ENCODE measurements at regions of chr12 and their contacts with region 1.

Region 1: GRCh38 chr12:27383429-27384260 is 51.0 kb downstream of the BMAL2 start:
- DNase-seq: peak; percentile 43
- ATAC-seq: peak; percentile 94
- H3K4me3 ChIP-seq: no peak overlapping the region
- H3K27ac ChIP-seq: no peak overlapping the region
- H3K4me1 ChIP-seq: no peaks in the 10 kb centered on the region
- H3K27me3 ChIP-seq: no peaks in the 10 kb centered on the region
- CTCF ChIP-seq: peak; percentile 84 to 95 (median 91)
- EP300 ChIP-seq: no peak
- POLR2A ChIP-seq: no peak
- RAD21 ChIP-seq: peak; percentile 83

Region 2: DNA sequence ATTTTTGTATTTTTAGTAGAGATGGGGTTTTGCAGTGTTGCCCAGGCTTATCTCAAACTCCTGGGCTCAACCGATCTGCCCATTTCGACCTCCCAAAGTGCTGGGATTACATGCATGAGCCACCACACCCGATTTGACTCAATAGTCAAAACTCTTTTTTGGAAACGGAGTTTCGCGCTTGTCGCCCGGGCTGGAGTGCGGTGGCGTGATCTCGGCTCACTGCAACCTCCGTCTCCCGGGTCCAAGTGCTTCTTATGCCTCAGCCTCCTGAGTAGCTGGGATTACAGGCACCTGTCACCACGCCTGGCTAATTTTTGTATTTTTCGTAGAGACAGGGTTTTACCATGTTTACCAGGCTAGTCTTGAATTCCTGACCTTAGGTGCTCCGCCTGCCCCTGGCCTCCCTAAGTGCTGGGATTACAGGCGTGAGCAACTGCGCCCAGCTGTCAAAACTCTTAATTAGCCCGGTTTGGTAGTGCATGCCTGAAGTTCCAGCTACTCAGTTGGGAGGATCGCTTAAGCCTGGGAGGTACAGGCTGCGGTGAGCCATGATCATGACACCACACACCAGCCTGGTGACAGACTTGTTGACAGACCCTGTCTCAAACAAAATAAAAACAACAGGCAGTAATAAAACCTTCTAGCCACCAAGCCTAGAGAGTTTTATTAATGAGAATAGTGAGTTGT is 348.9 kb before region 1 on chr12:
- CTCF ChIA-PET with region 1: interaction called, 17 read pairs
- POLR2A ChIA-PET with region 1: no interaction called
- RAD21 ChIA-PET with region 1: interaction called, 6 read pairs
- SMC1A ChIA-PET with region 1: interaction called, 4 read pairs
- in situ Hi-C with region 1: no loop called
- intact Hi-C with region 1: no loop called
- DNase-seq: no peak
- ATAC-seq: no peak
- H3K4me3 ChIP-seq: no peak overlapping the region
- H3K27ac ChIP-seq: no peak overlapping the region
- H3K4me1 ChIP-seq: no peaks in the 10 kb centered on the region
- H3K27me3 ChIP-seq: no peaks in the 10 kb centered on the region
- CTCF ChIP-seq: no peak
- EP300 ChIP-seq: no peak
- POLR2A ChIP-seq: no peak
- RAD21 ChIP-seq: no peak

Region 3: DNA sequence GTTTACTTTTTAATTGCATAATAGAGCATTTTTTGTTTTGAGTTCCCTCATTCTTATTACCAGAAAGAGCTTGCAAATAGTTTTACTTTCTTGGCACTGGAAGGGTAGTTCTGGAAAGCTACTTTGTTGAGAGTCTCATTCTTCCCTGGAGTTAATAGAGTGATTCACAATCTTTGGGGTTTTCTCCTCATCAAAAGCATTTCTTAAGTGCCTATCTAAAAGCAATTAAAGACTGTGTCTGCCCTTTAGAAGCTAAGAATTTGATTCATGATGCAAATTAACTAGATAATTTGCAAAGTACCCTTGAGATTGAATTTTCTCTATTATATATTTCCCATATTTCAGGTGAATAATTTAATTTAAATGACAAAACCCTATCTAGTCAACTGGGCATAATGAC is 59.1 kb before region 1 on chr12:
- CTCF ChIA-PET with region 1: interaction called, 61 read pairs
- POLR2A ChIA-PET with region 1: no interaction called
- RAD21 ChIA-PET with region 1: interaction called, 7 read pairs
- SMC1A ChIA-PET with region 1: interaction called, 16 read pairs
- in situ Hi-C with region 1: no loop called
- intact Hi-C with region 1: no loop called
- DNase-seq: no peak
- ATAC-seq: no peak
- H3K4me3 ChIP-seq: no peak overlapping the region
- H3K27ac ChIP-seq: no peak overlapping the region
- H3K4me1 ChIP-seq: peaks cover 9% of the 10 kb centered on the region
- H3K27me3 ChIP-seq: no peaks in the 10 kb centered on the region
- CTCF ChIP-seq: no peak
- EP300 ChIP-seq: no peak
- POLR2A ChIP-seq: no peak
- RAD21 ChIP-seq: no peak

Region 4: DNA sequence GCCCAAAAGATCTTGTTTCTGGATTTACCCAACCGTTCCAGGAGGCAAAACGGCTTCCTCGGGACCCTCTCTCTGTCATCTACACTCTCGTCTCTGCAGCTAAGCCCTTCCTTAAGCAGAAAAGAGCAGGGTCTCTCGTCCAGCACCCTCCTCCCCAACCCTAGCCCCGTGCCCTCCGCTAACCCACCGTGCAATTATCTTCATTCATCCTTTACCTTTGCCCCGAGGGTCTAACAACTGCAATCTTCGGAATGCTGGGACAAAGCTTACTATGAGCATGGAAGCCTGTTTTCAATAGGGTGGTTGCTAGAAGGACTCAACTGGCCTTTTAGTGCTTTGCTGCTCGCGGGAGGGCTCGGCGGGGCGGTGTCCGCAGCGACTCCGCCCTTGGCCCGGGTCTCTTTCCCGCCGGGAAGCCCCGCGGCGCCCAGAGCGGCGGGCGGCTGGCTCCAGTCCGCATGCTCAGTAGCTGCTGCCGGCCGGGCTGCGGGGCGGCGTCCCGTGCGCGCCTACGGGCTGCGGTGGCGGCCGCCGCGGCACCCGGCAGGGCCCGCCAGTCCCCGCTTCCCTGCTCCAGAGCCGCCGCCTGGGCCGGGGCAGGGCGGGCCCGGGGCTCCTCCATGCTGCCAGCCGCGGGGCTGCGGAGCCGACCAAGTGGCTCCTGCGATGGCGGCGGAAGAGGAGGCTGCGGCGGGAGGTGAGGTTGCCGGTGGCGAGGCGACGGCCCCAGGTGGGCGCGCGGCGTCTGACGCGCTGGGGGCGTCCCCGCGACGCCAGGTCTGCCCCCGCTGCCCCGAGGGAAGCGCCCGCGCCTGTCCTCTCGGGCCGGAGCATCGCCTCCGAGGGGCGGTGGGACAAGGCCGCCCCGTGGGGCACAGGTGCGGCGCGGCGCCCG is 51.0 kb before region 1 on chr12 and contains the start of gene BMAL2:
- CTCF ChIA-PET with region 1: interaction called, 61 read pairs
- POLR2A ChIA-PET with region 1: interaction called, 3 read pairs
- RAD21 ChIA-PET with region 1: interaction called, 10 read pairs
- SMC1A ChIA-PET with region 1: interaction called, 15 read pairs
- in situ Hi-C with region 1: no loop called
- intact Hi-C with region 1: loop called (anchors 2 kb)
- DNase-seq: no peak
- ATAC-seq: peak; percentile 49
- H3K4me3 ChIP-seq: peak within 1 kb of the TSS; percentile 85
- H3K27ac ChIP-seq: peak within 1 kb of the TSS; percentile 89
- H3K4me1 ChIP-seq: peaks cover 42% of the 10 kb centered on the region
- H3K27me3 ChIP-seq: no peaks in the 10 kb centered on the region
- CTCF ChIP-seq: no peak
- EP300 ChIP-seq: no peak
- POLR2A ChIP-seq: peak; percentile 87
- RAD21 ChIP-seq: no peak
- polyA plus RNA-seq, gene BMAL2: 7.9 to 13.1 TPM

Region 5: GRCh38 chr12:27367078-27367477 is 16.6 kb before region 1 on chr12:
- CTCF ChIA-PET with region 1: interaction called, 10 read pairs
- POLR2A ChIA-PET with region 1: interaction called, 3 read pairs
- RAD21 ChIA-PET with region 1: interaction called, 3 read pairs
- SMC1A ChIA-PET with region 1: interaction called, 9 read pairs
- in situ Hi-C with region 1: no loop called
- intact Hi-C with region 1: no loop called
- DNase-seq: no peak
- ATAC-seq: no peak
- H3K4me3 ChIP-seq: no peak overlapping the region
- H3K27ac ChIP-seq: no peak overlapping the region
- H3K4me1 ChIP-seq: no peaks in the 10 kb centered on the region
- H3K27me3 ChIP-seq: no peaks in the 10 kb centered on the region
- CTCF ChIP-seq: no peak
- EP300 ChIP-seq: no peak
- POLR2A ChIP-seq: no peak
- RAD21 ChIP-seq: no peak

Region 6: GRCh38 chr12:27398466-27398865 is 14.8 kb after region 1 on chr12:
- CTCF ChIA-PET with region 1: interaction called, 10 read pairs
- POLR2A ChIA-PET with region 1: no interaction called
- RAD21 ChIA-PET with region 1: no interaction called
- SMC1A ChIA-PET with region 1: interaction called, 7 read pairs
- in situ Hi-C with region 1: no loop called
- intact Hi-C with region 1: no loop called
- DNase-seq: no peak
- ATAC-seq: no peak
- H3K4me3 ChIP-seq: no peak overlapping the region
- H3K27ac ChIP-seq: no peak overlapping the region
- H3K4me1 ChIP-seq: no peaks in the 10 kb centered on the region
- H3K27me3 ChIP-seq: no peaks in the 10 kb centered on the region
- CTCF ChIP-seq: no peak
- EP300 ChIP-seq: no peak
- POLR2A ChIP-seq: no peak
- RAD21 ChIP-seq: no peak

Region 7: DNA sequence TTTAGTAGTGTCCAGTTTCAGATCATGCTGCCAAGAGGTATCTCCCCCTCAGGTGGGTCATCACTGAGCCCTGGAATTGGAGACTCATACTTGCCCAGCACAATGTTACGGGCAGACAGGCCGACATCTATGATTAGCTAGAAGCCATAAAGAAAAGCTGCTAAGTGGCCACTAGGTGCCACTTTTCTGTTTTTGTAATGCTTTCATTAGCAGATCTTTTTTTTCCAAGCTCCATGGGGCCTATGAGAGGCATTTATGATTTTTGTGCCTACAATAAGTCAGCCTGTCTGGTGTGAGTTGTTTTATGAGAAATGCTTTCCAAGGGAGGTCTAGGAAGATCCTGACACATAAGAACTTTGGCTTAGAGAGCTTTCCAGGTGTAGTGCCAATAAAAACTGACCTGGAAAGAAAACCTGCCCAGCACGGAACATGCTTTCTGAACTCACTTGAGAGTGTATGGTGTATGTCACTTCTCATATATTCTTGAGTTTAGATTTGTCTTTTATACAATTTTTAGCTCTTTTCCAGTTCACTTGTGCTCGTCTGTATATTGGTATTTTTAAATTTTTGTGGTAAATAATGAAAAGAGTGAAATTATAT is 41.1 kb after region 1 on chr12:
- CTCF ChIA-PET with region 1: no interaction called
- POLR2A ChIA-PET with region 1: no interaction called
- RAD21 ChIA-PET with region 1: no interaction called
- SMC1A ChIA-PET with region 1: no interaction called
- in situ Hi-C with region 1: no loop called
- intact Hi-C with region 1: no loop called
- DNase-seq: no peak
- ATAC-seq: peak; percentile 62
- H3K4me3 ChIP-seq: no peak overlapping the region
- H3K27ac ChIP-seq: no peak overlapping the region
- H3K4me1 ChIP-seq: no peaks in the 10 kb centered on the region
- H3K27me3 ChIP-seq: no peaks in the 10 kb centered on the region
- CTCF ChIP-seq: peak; percentile 38 to 48 (median 39); a peak in 5 of 6 replicates
- EP300 ChIP-seq: no peak
- POLR2A ChIP-seq: no peak
- RAD21 ChIP-seq: peak; percentile 45

Region 8: DNA sequence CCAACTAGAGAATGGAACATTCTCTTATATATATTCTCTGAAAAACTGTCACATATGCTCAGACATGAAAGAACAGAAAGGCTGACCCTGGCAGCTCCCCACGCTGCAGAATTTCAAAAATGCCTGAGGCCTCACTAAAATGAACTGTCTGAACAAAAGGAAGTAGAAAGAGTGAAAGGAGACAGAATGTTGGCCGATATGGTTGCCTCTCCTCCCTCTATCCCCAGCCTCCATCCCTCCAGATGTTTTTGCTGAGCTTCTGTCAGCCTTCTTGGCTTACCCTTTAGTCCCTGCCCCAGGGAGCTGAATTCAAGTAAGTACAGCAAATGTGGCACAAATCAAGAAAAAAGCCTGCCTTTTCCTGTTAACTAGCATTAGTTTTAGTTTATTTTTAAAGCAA is 69.8 kb after region 1 on chr12:
- CTCF ChIA-PET with region 1: no interaction called
- POLR2A ChIA-PET with region 1: no interaction called
- RAD21 ChIA-PET with region 1: no interaction called
- SMC1A ChIA-PET with region 1: no interaction called
- in situ Hi-C with region 1: no loop called
- intact Hi-C with region 1: no loop called
- DNase-seq: no peak
- ATAC-seq: no peak
- H3K4me3 ChIP-seq: no peak overlapping the region
- H3K27ac ChIP-seq: no peak overlapping the region
- H3K4me1 ChIP-seq: no peaks in the 10 kb centered on the region
- H3K27me3 ChIP-seq: no peaks in the 10 kb centered on the region
- CTCF ChIP-seq: no peak
- EP300 ChIP-seq: no peak
- POLR2A ChIP-seq: no peak
- RAD21 ChIP-seq: no peak

Region 9: GRCh38 chr12:27652174-27652763 is 268.6 kb after region 1 on chr12:
- CTCF ChIA-PET with region 1: interaction called, 3 read pairs
- POLR2A ChIA-PET with region 1: interaction called, 3 read pairs
- RAD21 ChIA-PET with region 1: no interaction called
- SMC1A ChIA-PET with region 1: no interaction called
- in situ Hi-C with region 1: no loop called
- intact Hi-C with region 1: loop called (anchors 1 kb)
- DNase-seq: peak; percentile 8
- ATAC-seq: peak; percentile 71
- H3K4me3 ChIP-seq: no peak overlapping the region
- H3K27ac ChIP-seq: no peak overlapping the region
- H3K4me1 ChIP-seq: peaks cover 5% of the 10 kb centered on the region; the same call in 1 of the 2 replicates
- H3K27me3 ChIP-seq: no peaks in the 10 kb centered on the region
- CTCF ChIP-seq: peak; percentile 77 to 81 (median 80)
- EP300 ChIP-seq: no peak
- POLR2A ChIP-seq: no peak
- RAD21 ChIP-seq: peak; percentile 90